ENCODE measurements at regions of chr4 and their contacts with region 1.

Region 1: DNA sequence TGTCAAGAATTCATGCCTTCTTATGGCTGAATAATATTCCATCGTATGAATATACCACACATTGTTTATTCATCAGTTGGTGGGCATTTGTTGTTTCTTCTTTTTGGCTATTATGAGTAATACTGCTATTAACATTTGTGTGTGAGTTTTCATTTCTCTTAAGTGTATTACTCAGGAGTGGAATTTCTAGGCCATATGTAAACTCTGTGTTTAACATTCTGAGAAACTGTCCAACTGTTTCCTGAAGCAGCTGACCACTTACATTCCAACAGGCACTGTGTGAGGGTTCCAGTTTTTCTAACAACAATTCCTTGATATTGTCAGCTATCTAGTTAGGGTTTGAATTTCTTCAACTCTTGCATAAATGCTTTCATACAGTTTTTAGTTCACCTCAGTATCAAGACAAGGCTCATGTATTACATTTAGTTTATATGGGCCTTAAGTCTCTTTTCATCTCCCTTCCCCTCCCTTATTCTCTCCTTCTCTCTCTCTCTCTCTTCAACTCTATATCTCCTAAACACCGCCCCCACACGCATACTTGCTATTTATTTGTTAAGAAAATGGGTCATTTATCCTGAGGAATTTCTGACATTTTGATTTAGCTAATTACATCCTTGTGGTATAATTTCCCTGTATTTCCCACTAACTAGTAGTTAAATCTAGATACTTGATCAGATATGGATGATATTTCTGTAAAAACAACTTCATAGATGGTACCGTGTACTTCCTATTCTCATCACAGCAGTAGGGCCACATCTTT is 77.4 kb downstream of the WDR19 start:
- DNase-seq: peak; percentile 10
- H3K4me3 ChIP-seq: no peak overlapping the region
- H3K27ac ChIP-seq: no peak overlapping the region
- H3K4me1 ChIP-seq: no peaks in the 10 kb centered on the region
- H3K27me3 ChIP-seq: no peaks in the 10 kb centered on the region
- CTCF ChIP-seq: no peak

Region 2: GRCh38 chr4:38867478-38868058 is 392.2 kb before region 1 on chr4 and contains the start of gene FAM114A1:
- CTCF ChIA-PET with region 1: no interaction called
- POLR2A ChIA-PET with region 1: interaction called, 20 read pairs
- intact Hi-C with region 1: no loop called
- DNase-seq: peak; percentile 63
- H3K4me3 ChIP-seq: peak within 1 kb of the TSS; percentile 53
- H3K27ac ChIP-seq: no peak within 1 kb of the TSS
- H3K4me1 ChIP-seq: no peaks in the 10 kb centered on the region
- H3K27me3 ChIP-seq: no peaks in the 10 kb centered on the region
- CTCF ChIP-seq: no peak
- total RNA-seq, gene FAM114A1: 4.2 and 6.3 TPM in 2 replicates

Measured in A673 (cell line).